K562 (cell line): ENCODE measurements at regions of chr3 and their contacts with region 1.

Region 1: DNA sequence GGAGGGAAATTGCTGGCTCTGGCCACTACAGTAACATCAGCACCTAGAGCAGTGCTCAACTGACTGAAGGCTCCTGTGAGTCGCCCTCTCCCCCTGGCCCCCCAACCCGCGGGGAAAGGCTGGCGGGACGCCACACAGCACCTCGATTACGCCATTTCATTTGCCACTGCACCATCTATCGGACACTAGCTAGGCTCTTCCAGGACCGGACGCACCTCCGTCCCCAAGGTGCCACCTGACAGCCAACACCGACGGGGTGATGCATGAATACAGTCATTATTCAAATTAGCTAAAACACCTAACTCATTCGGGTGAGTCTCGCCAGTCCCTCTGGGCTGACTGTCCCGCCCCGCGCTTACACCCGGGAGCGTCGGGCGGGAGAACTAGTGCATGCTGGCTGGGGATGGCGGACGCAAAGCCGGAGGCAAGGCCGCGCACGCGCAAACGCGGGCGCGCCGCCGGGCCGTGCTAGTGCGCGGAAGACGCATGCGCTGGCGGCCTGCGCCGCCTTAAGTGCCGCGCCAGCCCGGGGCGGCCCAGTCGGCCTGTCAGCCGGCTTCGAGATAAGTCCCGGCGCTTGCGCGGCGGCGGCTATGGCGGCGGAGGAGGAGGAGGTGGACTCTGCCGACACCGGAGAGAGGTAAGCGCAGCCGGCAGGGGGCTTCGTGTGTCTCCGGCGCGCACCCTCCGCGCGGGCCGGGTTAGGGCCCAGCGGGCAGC is at the start of gene ABHD5:
- DNase-seq: peak; percentile 95 to 99 (median 96)
- ATAC-seq: peak; percentile 82
- H3K4me3 ChIP-seq: peak within 1 kb of the TSS; percentile 80
- H3K27ac ChIP-seq: peak within 1 kb of the TSS; percentile 91
- H3K4me1 ChIP-seq: peaks cover 48 to 63% of the 10 kb centered on the region in 2 experiments
- H3K27me3 ChIP-seq: no peaks in the 10 kb centered on the region
- CTCF ChIP-seq: peak; percentile 42 to 69 (median 60)
- EP300 ChIP-seq: peak; percentile 13
- POLR2A ChIP-seq: peak; percentile 98
- RAD21 ChIP-seq: peak; percentile 50 to 52
- polyA plus RNA-seq, gene ABHD5: 31.9 to 35.0 TPM

Region 2: GRCh38 chr3:43432462-43432861 is 258.1 kb before region 1 on chr3:
- CTCF ChIA-PET with region 1: no interaction called
- POLR2A ChIA-PET with region 1: no interaction called
- in situ Hi-C with region 1: no loop called
- intact Hi-C with region 1: no loop called
- DNase-seq: no peak
- ATAC-seq: no peak
- H3K4me3 ChIP-seq: no peak overlapping the region
- H3K27ac ChIP-seq: no peak overlapping the region
- H3K4me1 ChIP-seq: no peaks in the 10 kb centered on the region
- H3K27me3 ChIP-seq: no peaks in the 10 kb centered on the region
- CTCF ChIP-seq: no peak
- EP300 ChIP-seq: no peak
- POLR2A ChIP-seq: no peak
- RAD21 ChIP-seq: no peak

Region 3: GRCh38 chr3:43621656-43622432 is 68.7 kb before region 1 on chr3 and contains the start of gene ANO10:
- CTCF ChIA-PET with region 1: no interaction called
- POLR2A ChIA-PET with region 1: interaction called, 17 read pairs
- in situ Hi-C with region 1: no loop called
- intact Hi-C with region 1: loop called (anchors 1 kb)
- DNase-seq: peak; percentile 98 to 100 (median 99)
- ATAC-seq: peak; percentile 94
- H3K4me3 ChIP-seq: peak within 1 kb of the TSS; percentile 89
- H3K27ac ChIP-seq: peak within 1 kb of the TSS; percentile 86
- H3K4me1 ChIP-seq: peaks cover 7 to 20% of the 10 kb centered on the region in 2 experiments; a peak in 4 of 5 replicates
- H3K27me3 ChIP-seq: no peaks in the 10 kb centered on the region
- CTCF ChIP-seq: no peak
- EP300 ChIP-seq: no peak
- POLR2A ChIP-seq: no peak; the same call in 1 of the 2 replicates
- RAD21 ChIP-seq: peak in 1 of 2 experiments; percentile 17; a peak in 1 of 4 replicates
- polyA plus RNA-seq, gene ANO10: 6.4 to 14.2 TPM

Region 4: DNA sequence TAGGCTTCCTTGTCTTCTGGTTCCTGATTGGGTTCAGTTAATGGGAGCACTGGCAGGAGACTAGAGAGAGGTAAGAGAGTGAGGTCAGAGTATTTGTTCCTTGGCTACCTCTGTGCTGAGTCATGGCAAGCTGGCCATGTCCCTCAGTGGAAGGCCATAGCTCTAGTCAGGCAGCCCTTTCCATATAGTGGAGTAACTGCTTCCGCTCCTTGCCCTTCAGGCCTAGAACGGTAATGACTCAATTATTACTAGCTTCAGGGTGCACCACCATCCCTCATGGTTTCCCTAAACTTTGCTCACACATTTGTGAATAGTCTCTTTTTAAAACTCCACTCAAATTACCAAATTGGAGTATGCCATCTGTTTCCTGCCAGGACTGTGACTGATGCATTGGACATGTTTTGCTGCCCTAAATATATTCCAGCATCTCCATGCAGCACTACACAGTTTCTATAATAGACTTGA is 58.3 kb before region 1 on chr3:
- CTCF ChIA-PET with region 1: no interaction called
- POLR2A ChIA-PET with region 1: no interaction called
- in situ Hi-C with region 1: no loop called
- intact Hi-C with region 1: no loop called
- DNase-seq: peak; percentile 35 to 82 (median 60)
- ATAC-seq: peak; percentile 98
- H3K4me3 ChIP-seq: no peak overlapping the region
- H3K27ac ChIP-seq: peak overlapping the region; percentile 63
- H3K4me1 ChIP-seq: peaks cover 0 to 15% of the 10 kb centered on the region in 2 experiments; a peak in 4 of 5 replicates
- H3K27me3 ChIP-seq: no peaks in the 10 kb centered on the region; a peak in 1 of 5 replicates
- CTCF ChIP-seq: 0 out of 6 replicates have a peak, but pooled peaks of 1 of the 3 experiments have one; percentile 10
- EP300 ChIP-seq: no peak
- POLR2A ChIP-seq: no peak
- RAD21 ChIP-seq: peak in 1 of 2 experiments; percentile 31; a peak in 2 of 4 replicates

Region 5: GRCh38 chr3:43649365-43649968 is 41.1 kb before region 1 on chr3:
- CTCF ChIA-PET with region 1: no interaction called
- POLR2A ChIA-PET with region 1: interaction called, 8 read pairs
- in situ Hi-C with region 1: no loop called
- intact Hi-C with region 1: loop called (anchors 2 kb)
- DNase-seq: peak in 2 of 4 experiments; percentile 53 to 55
- ATAC-seq: peak; percentile 80
- H3K4me3 ChIP-seq: peak overlapping the region; percentile 15
- H3K27ac ChIP-seq: peak overlapping the region; percentile 27; the same call in 1 of the 3 replicates
- H3K4me1 ChIP-seq: peaks cover 3 to 32% of the 10 kb centered on the region in 2 experiments; a peak in 3 of 5 replicates
- H3K27me3 ChIP-seq: no peaks in the 10 kb centered on the region
- CTCF ChIP-seq: peak in 2 of 3 experiments; percentile 36 to 38; a peak in 2 of 6 replicates
- EP300 ChIP-seq: no peak
- POLR2A ChIP-seq: no peak
- RAD21 ChIP-seq: peak in 1 of 2 experiments; percentile 32; a peak in 2 of 4 replicates

Region 6: DNA sequence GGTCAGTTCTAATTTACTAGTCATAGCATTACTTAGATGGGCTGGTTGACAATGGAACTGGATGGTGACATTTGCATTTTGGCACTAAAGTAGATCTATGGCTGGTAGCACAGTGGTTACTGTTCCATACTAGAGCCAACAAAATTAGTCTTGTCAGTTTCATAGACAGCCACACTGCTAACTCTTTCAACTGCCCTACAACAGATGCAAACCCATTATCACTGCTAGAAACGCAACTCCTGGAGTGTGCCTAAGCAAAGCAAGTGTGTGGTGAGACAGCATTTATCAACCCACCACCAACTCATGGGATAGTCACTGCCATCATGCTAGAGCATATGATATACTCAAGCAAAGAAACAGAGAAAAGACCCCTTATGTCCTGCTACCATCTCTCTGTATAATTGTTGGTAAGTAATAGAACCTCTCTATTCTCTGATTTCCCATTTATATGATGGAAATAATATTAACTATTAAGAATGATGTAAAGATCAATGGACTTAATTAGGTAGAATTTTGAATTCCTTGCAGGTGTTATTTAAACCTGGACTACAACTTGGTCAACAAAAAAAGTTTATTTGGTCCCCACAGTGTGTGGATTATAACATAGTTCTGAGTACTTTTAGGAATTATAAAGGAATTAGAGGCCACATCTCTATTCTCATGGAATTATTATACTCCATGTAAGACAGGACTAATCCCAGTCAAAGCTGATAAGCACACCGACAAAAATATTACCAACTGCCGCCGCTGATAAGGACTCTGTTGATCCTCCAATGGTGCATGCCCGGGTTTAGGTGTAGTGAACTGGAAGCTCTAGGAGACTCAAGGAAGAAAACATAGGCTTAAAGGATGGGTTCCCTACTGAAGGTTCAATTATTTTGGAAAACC is 19.7 kb before region 1 on chr3:
- CTCF ChIA-PET with region 1: interaction called, 3 read pairs
- POLR2A ChIA-PET with region 1: interaction called, 32 read pairs
- in situ Hi-C with region 1: no loop called
- intact Hi-C with region 1: loop called (anchors 2 kb)
- DNase-seq: peak; percentile 53 to 89 (median 66)
- ATAC-seq: peak; percentile 89
- H3K4me3 ChIP-seq: no peak overlapping the region
- H3K27ac ChIP-seq: peak overlapping the region; percentile 79
- H3K4me1 ChIP-seq: peaks cover 14 to 63% of the 10 kb centered on the region in 2 experiments; a peak in 4 of 5 replicates
- H3K27me3 ChIP-seq: no peaks in the 10 kb centered on the region
- CTCF ChIP-seq: no peak
- EP300 ChIP-seq: peak; percentile 96
- POLR2A ChIP-seq: no peak
- RAD21 ChIP-seq: no peak; a peak in 1 of 4 replicates

Region 7: GRCh38 chr3:43707266-43707665 is 16.7 kb after region 1 on chr3:
- CTCF ChIA-PET with region 1: no interaction called
- POLR2A ChIA-PET with region 1: interaction called, 23 read pairs
- in situ Hi-C with region 1: no loop called
- intact Hi-C with region 1: no loop called
- DNase-seq: no peak
- ATAC-seq: no peak
- H3K4me3 ChIP-seq: no peak overlapping the region
- H3K27ac ChIP-seq: no peak overlapping the region
- H3K4me1 ChIP-seq: no peaks in the 10 kb centered on the region
- H3K27me3 ChIP-seq: no peaks in the 10 kb centered on the region
- CTCF ChIP-seq: no peak
- EP300 ChIP-seq: no peak
- POLR2A ChIP-seq: no peak
- RAD21 ChIP-seq: no peak